Activated naive CD4-positive, alpha-beta T cell treated with anti-CD3 and anti-CD28 coated beads for 36 hours (primary cell): ENCODE measurements at regions of chr12 and their contacts with region 1.

Region 1: DNA sequence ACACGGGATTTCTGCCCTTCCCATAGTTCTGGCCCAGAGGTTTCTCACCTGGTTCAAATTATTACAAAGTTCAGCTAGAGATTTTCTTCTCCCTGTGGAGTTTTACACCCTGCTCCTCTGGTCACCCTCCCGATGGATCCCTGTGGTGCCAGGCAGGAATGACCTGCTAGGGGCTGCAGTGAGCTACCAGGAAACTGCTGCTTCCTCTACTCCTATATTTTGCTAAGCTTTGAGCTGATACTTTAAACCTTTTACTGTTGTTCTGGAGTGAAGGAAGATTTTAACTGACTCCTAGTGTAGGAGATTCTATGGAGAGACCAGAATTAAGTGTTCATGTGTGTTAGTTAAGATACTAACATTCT is 30.4 kb upstream of the LRIG3 start:
- DNase-seq: no peak
- H3K4me3 Mint-ChIP-seq: no peak overlapping the region
- H3K27ac Mint-ChIP-seq: no peak overlapping the region
- H3K4me1 Mint-ChIP-seq: no peaks in the 10 kb centered on the region
- H3K27me3 Mint-ChIP-seq: no peaks in the 10 kb centered on the region

Region 2: GRCh38 chr12:57632694-57633477 is 1317.8 kb before region 1 on chr12 and contains the start of gene B4GALNT1:
- CTCF ChIA-PET with region 1: no interaction called
- intact Hi-C with region 1: no loop called
- DNase-seq: peak; percentile 65
- H3K4me3 Mint-ChIP-seq: peak within 1 kb of the TSS; percentile 73
- H3K27ac Mint-ChIP-seq: no peak within 1 kb of the TSS
- H3K4me1 Mint-ChIP-seq: peaks cover 8% of the 10 kb centered on the region
- H3K27me3 Mint-ChIP-seq: peaks cover 52% of the 10 kb centered on the region
- total RNA-seq, gene B4GALNT1: 1.4 to 1.8 TPM

Region 3: DNA sequence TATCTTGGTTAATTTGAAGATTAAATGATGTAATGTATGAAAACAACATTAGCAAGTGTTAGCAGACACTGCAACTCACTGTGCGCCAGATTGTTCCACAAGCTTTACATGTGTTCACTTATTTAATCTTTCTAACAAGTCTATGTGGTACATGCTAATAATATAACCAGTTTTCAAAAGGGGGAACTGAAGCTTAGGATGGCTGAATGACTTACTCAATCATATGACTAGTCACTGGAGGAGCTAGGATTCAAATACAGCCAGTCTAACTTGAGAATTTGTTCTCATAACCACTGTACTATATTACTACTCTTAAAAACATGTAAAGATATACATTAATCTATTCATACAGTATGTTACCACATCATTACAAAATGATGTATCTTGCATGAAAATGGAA is 30.0 kb after region 1 on chr12:
- CTCF ChIA-PET with region 1: no interaction called
- intact Hi-C with region 1: loop called (anchors 1 kb)
- DNase-seq: no peak
- H3K4me3 Mint-ChIP-seq: no peak overlapping the region
- H3K27ac Mint-ChIP-seq: no peak overlapping the region
- H3K4me1 Mint-ChIP-seq: no peaks in the 10 kb centered on the region
- H3K27me3 Mint-ChIP-seq: no peaks in the 10 kb centered on the region